HepG2 (cell line): ENCODE measurements at regions of chr4 and their contacts with region 1.

Region 1: DNA sequence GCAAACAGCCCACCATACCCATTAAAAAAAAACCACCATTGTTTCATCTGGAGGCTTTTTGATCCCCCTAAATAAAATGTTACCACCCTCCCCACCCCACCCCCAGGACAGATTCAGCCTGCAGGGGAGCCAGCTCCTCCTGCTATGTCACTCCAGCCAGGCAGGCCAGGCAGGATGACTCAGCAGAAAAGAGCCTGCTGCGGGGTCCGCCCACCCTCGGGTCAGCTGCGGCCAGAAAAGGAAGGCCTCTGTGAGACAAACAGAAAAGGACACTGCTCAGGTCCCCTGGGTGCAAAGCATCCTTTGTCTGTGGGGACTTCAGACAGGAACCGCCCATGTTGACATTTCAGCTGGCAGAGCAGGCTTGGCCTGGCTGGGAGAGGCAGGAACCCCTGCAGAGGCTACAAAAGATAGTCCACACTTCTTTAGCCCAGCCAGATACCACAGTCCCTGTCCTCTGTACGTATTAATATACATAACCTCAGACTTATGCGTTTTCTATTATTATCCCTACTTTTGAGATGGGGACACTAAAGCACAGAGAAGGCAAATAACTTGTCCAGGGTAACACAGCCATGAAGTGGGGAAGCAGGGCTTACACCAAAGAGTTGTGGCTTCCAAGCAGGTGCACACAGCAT is 147.7 kb downstream of the CPEB2 start:
- DNase-seq: peak; percentile 93
- ATAC-seq: peak; percentile 97
- H3K4me3 ChIP-seq: no peak overlapping the region
- H3K27ac ChIP-seq: peak overlapping the region; percentile 47
- H3K4me1 ChIP-seq: peaks cover 54% of the 10 kb centered on the region
- H3K27me3 ChIP-seq: no peaks in the 10 kb centered on the region
- CTCF ChIP-seq: 0 out of 2 replicates have a peak, but pooled peaks have one; percentile 17
- EP300 ChIP-seq: peak; percentile 46 to 79; a peak in 3 of 4 replicates
- POLR2A ChIP-seq: 0 out of 4 replicates have a peak, but pooled peaks of 1 of the 2 experiments have one; percentile 36
- RAD21 ChIP-seq: peak; percentile 22; the same call in 1 of the 2 replicates

Region 2: DNA sequence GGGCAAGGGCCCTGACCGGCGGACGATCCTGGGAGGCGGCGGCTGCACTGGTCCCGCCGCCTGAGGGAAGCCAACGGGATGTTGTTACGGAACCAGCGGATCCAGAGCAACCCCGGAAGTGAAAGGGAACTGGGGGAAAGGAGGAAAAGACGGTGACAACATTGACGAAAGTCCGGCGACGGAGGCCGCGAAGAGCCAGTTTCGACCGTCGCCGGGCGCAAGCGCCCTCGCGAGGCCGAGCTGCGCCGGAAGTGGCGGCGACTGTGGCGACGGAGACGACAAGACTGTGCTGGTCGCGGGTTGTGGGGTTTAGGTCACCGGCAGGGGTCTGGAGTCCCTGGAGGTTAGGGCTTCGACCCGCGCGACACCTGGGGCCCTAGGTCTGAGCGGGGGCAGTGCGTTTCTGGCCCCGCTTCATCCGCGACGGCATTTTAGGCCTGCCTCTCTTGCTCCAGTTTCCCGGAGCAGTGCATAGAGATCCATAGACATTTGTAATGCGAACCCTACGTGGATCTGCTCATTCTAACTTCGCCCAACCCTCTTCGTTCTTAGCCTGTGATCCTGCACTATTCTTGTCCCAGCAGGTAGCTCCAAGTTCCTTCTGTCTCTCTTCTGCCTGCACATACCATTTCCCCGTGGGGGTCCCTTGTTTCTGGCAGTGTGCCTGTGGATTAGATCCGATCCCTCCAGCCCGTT is 1522.2 kb before region 1 on chr4 and contains the start of gene BOD1L1:
- CTCF ChIA-PET with region 1: no interaction called
- POLR2A ChIA-PET with region 1: no interaction called
- in situ Hi-C with region 1: loop called (anchors 25 kb)
- intact Hi-C with region 1: no loop called
- DNase-seq: peak; percentile 90
- ATAC-seq: peak; percentile 96
- H3K4me3 ChIP-seq: peak within 1 kb of the TSS; percentile 78 to 97 (median 91)
- H3K27ac ChIP-seq: peak within 1 kb of the TSS; percentile 78
- H3K4me1 ChIP-seq: peaks cover 22% of the 10 kb centered on the region
- H3K27me3 ChIP-seq: no peaks in the 10 kb centered on the region; a peak in 1 of 5 replicates
- CTCF ChIP-seq: peak; percentile 83
- EP300 ChIP-seq: peak; percentile 18 to 59; a peak in 1 of 4 replicates
- POLR2A ChIP-seq: peak; percentile 81 to 84
- RAD21 ChIP-seq: no peak
- total RNA-seq, gene BOD1L1: 17.9 and 22.7 TPM in 2 replicates

Region 3: DNA sequence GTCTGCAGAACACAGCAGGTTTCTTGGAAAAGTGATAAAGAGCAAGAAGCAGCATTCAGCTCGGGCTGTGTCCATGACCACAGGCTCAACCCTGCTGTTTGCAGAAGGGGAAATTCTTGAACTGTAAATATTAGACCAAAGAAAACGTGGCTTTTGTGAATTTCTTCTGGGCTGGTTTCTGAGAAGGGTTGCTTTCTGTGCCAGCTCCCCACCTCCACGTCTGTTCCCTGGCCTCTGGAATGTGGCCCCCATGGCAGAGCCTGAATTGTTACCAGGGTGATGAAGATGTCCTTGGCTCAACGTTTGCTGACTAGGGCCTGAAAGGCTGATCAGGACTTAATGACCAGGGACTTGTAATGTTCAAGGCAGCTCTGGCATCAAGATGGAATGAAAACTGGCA is 31.7 kb before region 1 on chr4:
- CTCF ChIA-PET with region 1: no interaction called
- POLR2A ChIA-PET with region 1: no interaction called
- in situ Hi-C with region 1: no loop called
- intact Hi-C with region 1: loop called (anchors 5 kb)
- DNase-seq: peak; percentile 62
- ATAC-seq: peak; percentile 96
- H3K4me3 ChIP-seq: peak overlapping the region in 1 of 3 experiments; percentile 17; a peak in 1 of 6 replicates
- H3K27ac ChIP-seq: peak overlapping the region; percentile 23
- H3K4me1 ChIP-seq: peaks cover 25% of the 10 kb centered on the region
- H3K27me3 ChIP-seq: no peaks in the 10 kb centered on the region
- CTCF ChIP-seq: no peak
- EP300 ChIP-seq: peak in 1 of 2 experiments; percentile 57; a peak in 1 of 4 replicates
- POLR2A ChIP-seq: no peak
- RAD21 ChIP-seq: no peak

Region 4: DNA sequence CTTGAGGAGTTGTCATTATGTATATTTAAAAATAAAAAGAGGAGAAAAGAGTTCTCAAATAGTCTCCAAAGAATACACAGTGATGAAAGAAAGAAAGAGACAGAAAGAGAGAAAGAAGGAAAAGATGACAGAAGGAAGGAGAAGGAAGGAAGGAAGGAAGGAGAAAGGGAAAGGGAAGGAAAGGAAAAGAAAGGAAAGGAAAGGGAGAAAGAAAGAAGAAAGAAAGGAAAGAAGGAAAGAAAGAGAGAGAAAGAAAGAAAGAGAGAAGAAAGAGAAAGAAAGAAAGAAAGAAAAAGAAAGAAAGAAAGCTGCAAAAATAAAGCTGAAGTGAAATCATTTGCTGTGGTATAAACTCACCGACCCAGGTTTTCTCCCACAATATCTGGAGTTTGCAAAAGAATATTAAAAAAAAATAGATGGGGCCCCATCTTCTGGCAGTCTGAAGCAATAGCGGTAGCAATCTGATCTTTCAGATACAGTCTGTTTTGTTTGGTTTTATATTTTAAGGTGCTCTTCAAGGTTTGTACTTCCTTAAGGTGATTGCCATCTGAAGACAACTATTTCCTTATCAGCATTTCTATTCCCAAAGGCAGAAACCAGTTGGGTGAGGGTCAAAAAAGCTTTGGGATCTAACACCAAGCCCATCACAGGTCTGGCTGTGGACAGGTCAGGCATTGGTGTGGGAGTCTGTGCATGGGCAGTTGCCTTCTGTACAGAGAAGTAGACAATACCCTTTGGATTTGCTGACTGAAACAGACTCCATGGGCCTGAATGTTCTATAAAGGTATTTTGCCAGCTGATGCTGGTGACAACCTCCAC is 12.7 kb after region 1 on chr4:
- CTCF ChIA-PET with region 1: no interaction called
- POLR2A ChIA-PET with region 1: no interaction called
- in situ Hi-C with region 1: no loop called
- intact Hi-C with region 1: loop called (anchors 1 kb)
- DNase-seq: peak; percentile 15
- ATAC-seq: peak; percentile 54; the same call in 2 of the 3 replicates
- H3K4me3 ChIP-seq: no peak overlapping the region
- H3K27ac ChIP-seq: no peak overlapping the region
- H3K4me1 ChIP-seq: peaks cover 17% of the 10 kb centered on the region
- H3K27me3 ChIP-seq: no peaks in the 10 kb centered on the region
- CTCF ChIP-seq: peak; percentile 17; the same call in 1 of the 2 replicates
- EP300 ChIP-seq: no peak
- POLR2A ChIP-seq: no peak
- RAD21 ChIP-seq: no peak

Region 5: GRCh38 chr4:15182600-15183220 is 32.8 kb after region 1 on chr4:
- CTCF ChIA-PET with region 1: no interaction called
- POLR2A ChIA-PET with region 1: no interaction called
- in situ Hi-C with region 1: no loop called
- intact Hi-C with region 1: no loop called
- DNase-seq: no peak
- ATAC-seq: no peak
- H3K4me3 ChIP-seq: no peak overlapping the region
- H3K27ac ChIP-seq: no peak overlapping the region
- H3K4me1 ChIP-seq: no peaks in the 10 kb centered on the region
- H3K27me3 ChIP-seq: no peaks in the 10 kb centered on the region
- CTCF ChIP-seq: no peak
- EP300 ChIP-seq: no peak
- POLR2A ChIP-seq: no peak
- RAD21 ChIP-seq: no peak